ENCODE measurements at regions of chr9 and their contacts with region 1.

Region 1: GRCh38 chr9:30796764-30797163 is 1587.7 kb upstream of the ACO1 start:
- DNase-seq: no peak
- H3K4me3 ChIP-seq: no peak overlapping the region
- H3K27ac ChIP-seq: no peak overlapping the region
- H3K4me1 ChIP-seq: no peaks in the 10 kb centered on the region
- H3K27me3 ChIP-seq: no peaks in the 10 kb centered on the region

Region 2: GRCh38 chr9:30677221-30677620 is 119.5 kb before region 1 on chr9:
- in situ Hi-C with region 1: no loop called
- DNase-seq: no peak
- H3K4me3 ChIP-seq: no peak overlapping the region
- H3K27ac ChIP-seq: no peak overlapping the region
- H3K4me1 ChIP-seq: no peaks in the 10 kb centered on the region
- H3K27me3 ChIP-seq: no peaks in the 10 kb centered on the region

Region 3: GRCh38 chr9:31908158-31908890 is 1111.6 kb after region 1 on chr9:
- in situ Hi-C with region 1: loop called (anchors 25 kb)
- DNase-seq: peak; percentile 3
- H3K4me3 ChIP-seq: no peak overlapping the region
- H3K27ac ChIP-seq: no peak overlapping the region
- H3K4me1 ChIP-seq: no peaks in the 10 kb centered on the region
- H3K27me3 ChIP-seq: no peaks in the 10 kb centered on the region